ENCODE measurements at regions of chr1 and their contacts with region 1.

Region 1: DNA sequence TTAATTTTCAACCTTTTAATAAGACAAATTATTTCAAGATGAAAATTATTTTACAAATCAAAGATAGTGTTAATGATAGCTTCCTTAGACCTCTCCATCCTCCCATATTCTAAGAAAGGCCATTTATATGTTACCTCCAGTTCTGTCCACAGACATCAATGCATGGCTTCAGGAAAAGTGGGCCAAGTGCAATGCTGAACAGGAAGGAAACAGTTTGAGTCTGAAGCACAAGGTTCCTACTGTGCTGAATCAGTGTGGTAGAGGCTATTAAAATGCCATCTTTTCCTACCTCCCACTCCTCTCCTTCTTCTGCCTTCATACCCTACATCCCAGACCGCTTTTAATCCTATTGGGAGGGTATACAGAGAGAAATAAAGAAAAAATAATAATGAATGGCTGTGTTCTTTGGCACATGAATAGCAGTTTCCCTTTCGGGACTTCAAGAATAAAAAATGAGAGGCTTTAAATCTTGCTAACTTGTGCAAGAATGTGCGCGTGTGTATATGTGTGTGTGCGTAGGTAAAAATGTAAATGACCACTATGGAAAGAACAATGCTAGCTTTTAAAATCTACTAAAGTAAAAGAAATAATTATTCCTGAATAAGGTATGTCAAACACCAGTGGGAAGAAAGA is 62.6 kb upstream of the C1orf105 start:
- DNase-seq: no peak
- ATAC-seq: no peak
- H3K4me3 ChIP-seq: peak overlapping the region in 1 of 4 donors; percentile 15
- H3K27ac ChIP-seq: peak overlapping the region; percentile 51 to 67 (median 64)
- H3K4me1 ChIP-seq: peaks cover 14 to 24% of the 10 kb centered on the region in 2 donors
- H3K27me3 ChIP-seq: no peaks in the 10 kb centered on the region
- CTCF ChIP-seq: no peak
- POLR2A ChIP-seq: no peak

Region 2: DNA sequence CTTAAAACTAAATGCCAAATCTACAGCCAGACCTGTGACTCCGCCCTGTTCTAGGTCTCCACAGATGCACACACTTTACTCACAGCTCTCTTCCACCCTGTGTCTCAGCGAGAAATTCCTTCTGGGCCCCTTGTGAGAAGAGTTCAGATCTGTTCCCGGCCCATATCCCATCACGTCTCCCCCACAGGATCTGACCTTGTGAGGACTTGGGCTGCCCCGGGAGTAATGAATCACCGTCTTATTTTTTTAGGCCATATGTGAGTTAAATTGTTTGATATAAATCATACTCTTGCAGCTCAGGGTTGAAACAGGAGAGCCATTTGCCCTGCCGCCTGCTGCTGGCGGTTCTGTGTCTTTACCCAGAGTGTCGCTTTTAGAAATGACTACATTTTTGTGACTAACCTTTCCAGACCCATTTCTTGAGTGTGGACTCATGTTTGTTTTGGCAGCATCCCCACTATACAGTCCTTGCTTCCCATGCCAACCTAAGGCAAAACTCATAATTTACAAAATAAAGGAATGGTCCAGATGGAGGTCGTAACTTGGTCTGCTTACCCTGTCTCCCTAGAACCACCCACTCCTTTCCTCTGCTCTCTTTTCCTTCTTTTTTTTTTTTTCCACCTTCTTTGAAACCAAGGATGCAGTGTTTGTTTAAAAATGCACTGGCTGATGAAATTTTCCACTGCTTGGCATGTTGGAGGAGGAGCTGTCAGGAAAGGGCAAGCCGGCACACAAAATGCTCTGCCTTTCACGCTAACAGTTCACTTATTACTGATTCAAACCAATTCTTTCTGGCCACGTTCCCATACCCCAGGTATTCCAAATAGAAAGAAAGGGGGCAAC is 35.4 kb before region 1 on chr1:
- in situ Hi-C with region 1: no loop called
- intact Hi-C with region 1: loop called (anchors 5 kb)
- DNase-seq: peak; percentile 8 to 20
- ATAC-seq: peak; percentile 47 to 56
- H3K4me3 ChIP-seq: peak overlapping the region in 1 of 4 donors; percentile 17
- H3K27ac ChIP-seq: peak overlapping the region; percentile 32 to 59 (median 42)
- H3K4me1 ChIP-seq: peaks cover 0 to 3% of the 10 kb centered on the region in 2 donors
- H3K27me3 ChIP-seq: no peaks in the 10 kb centered on the region
- CTCF ChIP-seq: no peak
- POLR2A ChIP-seq: no peak